Transverse colon (tissue), 4 donors: ENCODE measurements at regions of chr6 and their contacts with region 1.

Region 1: GRCh38 chr6:118551063-118552053 is 3.3 kb downstream of the PLN start:
- DNase-seq: no peak
- H3K4me3 ChIP-seq: peak overlapping the region in 2 of 4 donors; percentile 23 to 31
- H3K27ac ChIP-seq: peak overlapping the region; percentile 11 to 72 (median 36)
- H3K4me1 ChIP-seq: peaks cover 0 to 13% (median 0%) of the 10 kb centered on the region in 4 donors
- H3K27me3 ChIP-seq: no peaks in the 10 kb centered on the region
- CTCF ChIP-seq: peak; percentile 34 to 50 (median 46)
- EP300 ChIP-seq: no peak
- POLR2A ChIP-seq: no peak

Region 2: DNA sequence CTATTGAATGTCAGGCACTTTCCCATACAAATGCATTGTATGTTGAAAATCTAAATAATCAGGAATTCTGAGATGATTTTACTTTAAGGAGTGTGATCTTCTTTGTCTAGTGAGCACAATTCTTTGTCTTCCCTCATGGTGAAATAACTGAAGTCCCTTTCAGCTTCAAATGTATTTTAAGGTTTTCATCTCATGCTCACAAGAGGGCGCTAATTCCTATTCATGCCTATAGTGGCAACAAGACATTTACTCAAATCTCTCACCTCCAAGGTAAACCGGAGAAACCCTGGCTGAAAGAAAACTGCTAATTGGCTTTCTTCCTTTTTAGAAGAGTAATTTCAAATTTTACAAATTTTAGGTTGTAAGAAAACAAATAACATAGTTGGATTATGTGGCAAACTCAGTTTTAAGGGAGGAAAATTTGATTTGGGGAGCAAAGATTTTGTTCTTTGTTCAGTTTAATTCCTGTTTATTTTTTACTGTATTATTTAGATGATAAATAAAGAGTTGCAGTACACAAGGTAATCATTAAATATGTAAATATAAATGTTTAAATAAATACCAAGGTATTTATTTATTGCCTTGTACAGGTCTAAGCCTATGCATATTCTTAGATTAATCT is 575.2 kb before region 1 on chr6:
- in situ Hi-C with region 1: loop called in 1 of 4 experiments (anchors 25 kb)
- intact Hi-C with region 1: no loop called
- DNase-seq: no peak
- H3K4me3 ChIP-seq: no peak overlapping the region
- H3K27ac ChIP-seq: no peak overlapping the region
- H3K4me1 ChIP-seq: no peaks in the 10 kb centered on the region
- H3K27me3 ChIP-seq: no peaks in the 10 kb centered on the region
- CTCF ChIP-seq: peak; percentile 32 to 50 (median 49)
- EP300 ChIP-seq: no peak
- POLR2A ChIP-seq: no peak

Region 3: DNA sequence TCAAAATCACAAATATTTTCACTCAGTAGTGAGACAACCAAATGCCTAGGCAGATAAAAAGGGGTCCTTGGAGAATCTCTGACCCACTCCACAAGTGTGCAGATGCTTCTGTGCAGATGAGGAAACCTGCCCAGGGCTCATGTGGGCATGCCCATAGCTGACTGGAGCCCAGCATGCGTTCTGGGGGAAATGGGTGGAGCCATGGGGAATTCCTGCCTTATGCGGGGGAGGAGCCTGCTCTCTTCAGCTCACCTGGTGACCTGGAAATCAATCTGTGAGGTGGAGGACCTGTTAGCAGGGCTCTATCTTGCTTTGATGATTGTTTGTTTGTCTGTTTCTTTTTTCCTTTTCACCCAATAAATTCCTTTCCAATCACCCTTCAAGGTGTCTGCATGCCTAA is 26.7 kb before region 1 on chr6:
- in situ Hi-C with region 1: no loop called
- intact Hi-C with region 1: no loop called
- DNase-seq: no peak
- H3K4me3 ChIP-seq: no peak overlapping the region
- H3K27ac ChIP-seq: peak overlapping the region in 1 of 4 donors; percentile 67
- H3K4me1 ChIP-seq: peaks cover 0 to 15% (median 7%) of the 10 kb centered on the region in 4 donors
- H3K27me3 ChIP-seq: no peaks in the 10 kb centered on the region
- CTCF ChIP-seq: no peak
- EP300 ChIP-seq: no peak
- POLR2A ChIP-seq: no peak

Region 4: DNA sequence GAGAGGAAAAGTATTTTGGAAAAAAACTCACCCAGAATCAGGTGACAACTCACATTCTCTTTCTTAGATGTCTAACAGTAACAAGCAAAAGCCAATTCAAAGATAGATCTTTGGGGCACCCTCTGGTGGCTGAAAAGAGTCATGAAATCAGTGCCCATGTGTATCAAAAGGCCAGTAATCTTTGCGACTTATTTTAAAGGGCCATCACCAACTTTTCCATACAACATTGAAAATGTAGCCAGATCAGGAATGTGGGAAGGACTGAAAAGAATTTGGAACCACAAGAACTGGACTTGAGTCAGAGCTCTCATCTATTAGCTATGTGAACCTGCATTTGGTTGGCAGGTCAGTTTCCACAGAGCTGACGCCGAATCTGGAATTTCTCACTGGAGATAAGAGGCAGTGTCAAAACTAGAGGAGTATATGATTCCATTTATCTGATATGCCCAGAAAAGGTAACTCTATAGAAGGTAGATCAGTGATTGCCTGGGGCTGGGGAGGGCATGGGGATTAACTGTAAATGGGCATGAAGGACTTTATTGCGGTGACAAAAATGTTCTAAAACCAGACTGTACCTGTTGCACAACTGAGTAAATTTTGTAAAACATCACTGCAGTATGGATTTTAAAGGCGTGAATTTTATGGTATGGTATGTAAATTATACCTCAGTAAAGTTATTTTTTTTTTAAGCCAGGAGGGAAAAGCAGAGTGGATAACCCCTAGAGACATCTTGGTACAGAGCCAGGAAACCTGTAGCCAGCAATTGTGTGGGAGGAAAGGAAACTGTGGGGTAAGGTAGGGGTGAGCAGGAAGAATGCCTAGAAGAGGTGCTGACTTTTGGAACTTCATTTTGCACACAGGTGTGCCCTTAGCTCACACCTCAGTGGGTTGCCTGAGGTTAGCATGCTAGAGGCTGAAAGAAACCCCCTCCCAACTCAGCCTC is 225.5 kb after region 1 on chr6:
- in situ Hi-C with region 1: loop called in 2 of 4 experiments (anchors 25 kb)
- intact Hi-C with region 1: no loop called
- DNase-seq: peak; percentile 59
- H3K4me3 ChIP-seq: no peak overlapping the region
- H3K27ac ChIP-seq: no peak overlapping the region
- H3K4me1 ChIP-seq: peaks cover 0 to 7% (median 0%) of the 10 kb centered on the region in 4 donors
- H3K27me3 ChIP-seq: no peaks in the 10 kb centered on the region
- CTCF ChIP-seq: peak; percentile 60 to 70 (median 66)
- EP300 ChIP-seq: no peak
- POLR2A ChIP-seq: no peak